Natural killer cell (primary cell): ENCODE measurements at regions of chr14 and their contacts with region 1.

Region 1: DNA sequence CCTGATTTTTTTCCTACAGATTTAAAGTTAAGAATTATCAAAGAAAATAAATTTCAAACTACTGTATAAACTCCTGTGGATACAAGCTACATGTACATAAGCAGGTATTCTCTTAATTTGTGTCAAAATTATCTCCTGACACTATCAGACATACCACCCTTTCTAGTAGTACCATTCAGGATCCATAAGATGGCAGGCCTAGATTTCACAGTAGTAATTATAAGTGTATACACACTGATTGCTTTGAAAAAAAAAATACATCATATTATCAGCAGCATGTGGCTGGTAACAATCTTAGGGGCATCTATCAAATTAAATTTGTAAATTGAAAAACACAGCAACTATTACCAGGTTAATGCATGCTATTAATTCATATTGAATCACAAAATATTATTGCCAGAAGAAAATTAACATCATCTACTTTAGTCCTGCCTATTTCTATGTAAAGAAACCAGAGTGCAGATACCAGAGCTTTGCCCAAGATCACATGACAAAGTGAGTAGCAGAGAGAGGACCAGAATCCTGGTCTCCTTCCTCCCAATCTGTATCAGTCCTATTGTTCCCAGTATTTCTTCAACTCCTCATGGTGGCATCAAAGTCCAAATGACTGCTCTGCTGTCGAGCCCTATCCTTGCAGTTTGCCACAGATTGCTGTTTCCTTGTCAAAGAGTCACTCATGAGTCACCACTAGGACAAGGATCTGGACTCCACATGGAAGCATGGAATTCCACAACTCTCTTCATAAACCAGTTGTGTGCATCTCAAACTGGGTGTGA is 27.7 kb upstream of the CALM1 start:
- DNase-seq: peak in 1 of 2 donors; percentile 69
- ATAC-seq: peak; percentile 79 to 92 (median 88)
- H3K4me3 ChIP-seq: no peak overlapping the region
- H3K4me3 Mint-ChIP-seq: no peak overlapping the region
- H3K27ac ChIP-seq: no peak overlapping the region
- H3K27ac Mint-ChIP-seq: no peak overlapping the region
- H3K4me1 ChIP-seq: no peaks in the 10 kb centered on the region
- H3K4me1 Mint-ChIP-seq: no peaks in the 10 kb centered on the region
- H3K27me3 ChIP-seq: no peaks in the 10 kb centered on the region
- H3K27me3 Mint-ChIP-seq: peaks cover 0 to 3% of the 10 kb centered on the region in 2 donors
- CTCF ChIP-seq: peak; percentile 49

Region 2: DNA sequence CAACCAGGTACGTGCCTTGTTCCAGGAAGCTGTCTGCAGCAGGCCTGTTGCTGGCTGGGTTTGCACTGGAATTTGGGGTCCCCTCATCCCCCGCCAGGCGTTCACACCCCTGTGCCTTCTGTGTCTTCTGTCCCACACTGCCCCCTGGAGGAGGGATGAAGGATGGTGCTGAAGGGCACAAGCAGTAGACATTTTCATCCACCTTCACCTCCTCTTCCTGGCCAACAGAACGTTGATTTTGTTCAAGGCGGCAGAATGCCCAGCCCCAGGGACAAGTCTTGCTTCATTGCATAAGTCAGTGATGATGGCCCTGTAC is 149.8 kb after region 1 on chr14:
- intact Hi-C with region 1: loop called (anchors 1 kb)
- DNase-seq: peak in 1 of 2 donors; percentile 76
- ATAC-seq: peak in 2 of 3 donors; percentile 54 to 72
- H3K4me3 ChIP-seq: no peak overlapping the region
- H3K4me3 Mint-ChIP-seq: no peak overlapping the region
- H3K27ac ChIP-seq: no peak overlapping the region
- H3K27ac Mint-ChIP-seq: no peak overlapping the region
- H3K4me1 ChIP-seq: no peaks in the 10 kb centered on the region
- H3K4me1 Mint-ChIP-seq: no peaks in the 10 kb centered on the region
- H3K27me3 ChIP-seq: no peaks in the 10 kb centered on the region
- H3K27me3 Mint-ChIP-seq: no peaks in the 10 kb centered on the region
- CTCF ChIP-seq: peak; percentile 56